A673 (cell line): ENCODE measurements at regions of chr2 and their contacts with region 1.

Region 1: GRCh38 chr2:229586746-229587705 is 127.3 kb downstream of the DNER start:
- DNase-seq: peak; percentile 78
- H3K4me3 ChIP-seq: no peak overlapping the region
- H3K27ac ChIP-seq: no peak overlapping the region
- H3K4me1 ChIP-seq: no peaks in the 10 kb centered on the region
- H3K27me3 ChIP-seq: no peaks in the 10 kb centered on the region
- CTCF ChIP-seq: peak; percentile 86

Region 2: DNA sequence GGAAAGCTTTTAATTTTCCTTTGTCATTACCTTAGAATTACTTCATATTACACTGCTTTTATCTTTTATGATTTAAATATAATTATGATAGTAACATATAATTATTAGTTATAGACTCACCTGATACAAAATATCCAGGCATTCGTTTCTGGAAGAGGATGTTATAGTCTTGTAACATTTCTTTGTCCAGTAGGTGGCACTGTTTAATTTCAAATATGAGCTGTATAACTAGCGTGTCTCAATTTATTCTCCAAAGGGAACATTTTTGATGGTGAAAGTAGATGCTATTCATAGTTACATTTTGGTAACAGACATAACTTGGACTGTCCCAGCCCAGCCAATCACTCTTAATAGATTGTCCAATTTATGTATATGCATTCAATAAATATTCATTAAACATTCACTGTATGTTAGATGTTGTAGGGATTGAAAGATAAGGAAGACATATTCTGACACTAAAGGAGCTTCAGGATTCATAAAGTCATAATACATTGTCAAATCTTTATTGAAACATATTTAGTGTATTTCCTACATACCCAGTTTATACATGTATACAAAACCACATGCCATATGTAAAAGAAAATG is 1696.4 kb before region 1 on chr2:
- CTCF ChIA-PET with region 1: no interaction called
- POLR2A ChIA-PET with region 1: no interaction called
- intact Hi-C with region 1: loop called (anchors 2 kb)
- DNase-seq: peak; percentile 83
- H3K4me3 ChIP-seq: no peak overlapping the region
- H3K27ac ChIP-seq: peak overlapping the region; percentile 62
- H3K4me1 ChIP-seq: peaks cover 12% of the 10 kb centered on the region
- H3K27me3 ChIP-seq: no peaks in the 10 kb centered on the region
- CTCF ChIP-seq: peak; percentile 68

Region 3: DNA sequence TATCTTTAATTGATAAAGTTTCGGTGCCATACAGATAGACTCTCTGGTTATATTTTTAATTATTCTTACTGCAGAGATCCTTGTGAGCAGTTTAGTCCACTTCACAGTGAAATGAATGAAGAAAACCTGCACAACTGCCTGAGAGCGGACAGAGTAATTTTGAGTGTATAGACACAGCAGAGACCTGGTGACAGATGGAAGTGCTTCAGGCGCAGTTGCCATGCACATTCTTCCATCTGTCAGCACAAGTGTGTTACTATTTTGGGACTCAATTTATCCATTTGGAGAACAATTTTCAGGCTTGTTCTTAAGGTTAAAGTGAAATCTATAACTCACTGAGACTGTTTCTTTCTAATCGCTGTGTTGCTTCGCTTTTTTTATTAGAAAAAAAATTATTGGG is 1257.7 kb before region 1 on chr2:
- CTCF ChIA-PET with region 1: no interaction called
- POLR2A ChIA-PET with region 1: no interaction called
- intact Hi-C with region 1: no loop called
- DNase-seq: no peak
- H3K4me3 ChIP-seq: no peak overlapping the region
- H3K27ac ChIP-seq: no peak overlapping the region
- H3K4me1 ChIP-seq: no peaks in the 10 kb centered on the region
- H3K27me3 ChIP-seq: no peaks in the 10 kb centered on the region
- CTCF ChIP-seq: no peak

Region 4: DNA sequence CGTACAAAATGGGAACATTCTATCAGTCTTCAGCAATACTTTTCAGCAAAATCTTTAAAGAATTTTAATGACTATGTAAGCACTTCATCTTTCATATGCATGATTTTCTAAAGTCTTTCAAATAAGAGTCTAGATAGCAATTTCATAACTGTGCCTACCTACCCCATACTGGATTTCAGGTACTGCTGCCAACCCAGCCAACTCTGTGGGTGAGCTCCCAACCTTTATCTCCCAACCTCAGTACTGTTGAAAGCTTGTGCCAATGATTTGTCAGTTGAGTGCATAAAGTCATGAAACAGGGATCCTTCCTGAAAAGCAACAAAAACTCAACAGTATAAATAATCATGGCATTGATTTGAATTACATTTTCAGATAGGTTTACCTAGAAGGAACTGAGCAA is 612.9 kb before region 1 on chr2:
- CTCF ChIA-PET with region 1: interaction called, 10 read pairs
- POLR2A ChIA-PET with region 1: no interaction called
- intact Hi-C with region 1: no loop called
- DNase-seq: no peak
- H3K4me3 ChIP-seq: no peak overlapping the region
- H3K27ac ChIP-seq: no peak overlapping the region
- H3K4me1 ChIP-seq: no peaks in the 10 kb centered on the region
- H3K27me3 ChIP-seq: no peaks in the 10 kb centered on the region
- CTCF ChIP-seq: no peak

Region 5: GRCh38 chr2:229273723-229274338 is 313.2 kb before region 1 on chr2:
- CTCF ChIA-PET with region 1: no interaction called
- POLR2A ChIA-PET with region 1: no interaction called
- intact Hi-C with region 1: loop called (anchors 5 kb)
- DNase-seq: peak; percentile 90
- H3K4me3 ChIP-seq: peak overlapping the region; percentile 22
- H3K27ac ChIP-seq: no peak overlapping the region
- H3K4me1 ChIP-seq: peaks cover 5% of the 10 kb centered on the region
- H3K27me3 ChIP-seq: peaks cover 7% of the 10 kb centered on the region
- CTCF ChIP-seq: peak; percentile 85

Region 6: GRCh38 chr2:229431327-229431954 is 155.6 kb before region 1 on chr2:
- CTCF ChIA-PET with region 1: interaction called, 12 read pairs
- POLR2A ChIA-PET with region 1: no interaction called
- intact Hi-C with region 1: loop called (anchors 2 kb)
- DNase-seq: peak; percentile 69
- H3K4me3 ChIP-seq: no peak overlapping the region
- H3K27ac ChIP-seq: no peak overlapping the region
- H3K4me1 ChIP-seq: no peaks in the 10 kb centered on the region
- H3K27me3 ChIP-seq: no peaks in the 10 kb centered on the region
- CTCF ChIP-seq: peak; percentile 64